ENCODE measurements at regions of chr11 and their contacts with region 1.

Region 1: DNA sequence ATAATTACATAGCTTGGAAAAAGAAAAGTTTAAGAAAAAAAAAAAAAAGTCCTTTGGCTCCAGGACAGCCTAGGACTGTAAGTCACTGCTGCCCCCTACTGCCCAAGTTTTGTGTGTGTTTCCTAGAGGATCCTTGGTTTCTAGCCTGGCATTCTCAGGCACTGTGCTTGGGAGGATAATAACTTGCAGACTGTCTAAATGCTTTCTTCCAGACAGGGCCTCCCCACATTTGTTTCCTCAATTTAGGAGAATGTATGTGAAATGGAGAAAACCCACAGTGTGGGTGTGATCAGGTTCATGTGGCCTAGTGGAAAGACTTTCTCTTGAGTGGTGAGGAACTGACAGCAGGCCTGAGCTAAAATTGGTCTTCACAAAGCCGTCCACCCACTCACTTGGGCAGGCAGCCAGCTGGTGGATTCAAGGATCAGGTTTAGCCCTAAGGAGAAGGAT is 191.0 kb downstream of the NAV2 start:
- DNase-seq: peak; percentile 88 to 89
- H3K4me3 ChIP-seq: no peak overlapping the region
- H3K27ac ChIP-seq: peak overlapping the region in 2 of 3 donors; percentile 67 to 70
- H3K4me1 ChIP-seq: peaks cover 26 to 63% of the 10 kb centered on the region in 2 donors
- H3K27me3 ChIP-seq: no peaks in the 10 kb centered on the region
- CTCF ChIP-seq: peak; percentile 35 to 92 (median 78)
- POLR2A ChIP-seq: no peak

Region 2: GRCh38 chr11:19742588-19743292 is 160.9 kb before region 1 on chr11:
- intact Hi-C with region 1: loop called (anchors 5 kb)
- DNase-seq: peak; percentile 86 to 90
- H3K4me3 ChIP-seq: no peak overlapping the region
- H3K27ac ChIP-seq: peak overlapping the region; percentile 40 to 77 (median 60)
- H3K4me1 ChIP-seq: peaks cover 16 to 48% of the 10 kb centered on the region in 2 donors
- H3K27me3 ChIP-seq: no peaks in the 10 kb centered on the region
- CTCF ChIP-seq: peak; percentile 72 to 99 (median 92)
- POLR2A ChIP-seq: no peak

Region 3: DNA sequence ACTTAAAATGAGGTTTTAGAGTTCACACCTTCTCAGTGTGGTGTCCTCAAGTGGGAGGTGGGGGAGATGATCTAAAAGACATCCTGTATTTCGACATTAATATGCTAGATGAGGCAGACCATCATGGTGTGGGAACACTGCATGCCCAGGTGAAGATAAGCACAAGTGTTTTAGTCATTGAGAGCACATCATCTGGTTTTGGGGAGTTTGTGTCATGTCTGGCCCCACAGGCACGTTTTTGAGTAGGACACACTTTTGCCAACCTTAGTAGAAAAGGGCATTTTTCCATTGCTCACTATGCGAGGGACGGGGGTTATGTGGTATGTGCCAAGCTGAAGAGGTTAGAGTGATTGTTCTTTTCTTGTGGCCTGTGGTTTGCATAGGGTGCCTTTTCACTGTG is 67.3 kb after region 1 on chr11:
- intact Hi-C with region 1: no loop called
- DNase-seq: no peak
- H3K4me3 ChIP-seq: no peak overlapping the region
- H3K27ac ChIP-seq: no peak overlapping the region
- H3K4me1 ChIP-seq: peaks cover 0 to 12% of the 10 kb centered on the region in 2 donors
- H3K27me3 ChIP-seq: no peaks in the 10 kb centered on the region
- CTCF ChIP-seq: no peak
- POLR2A ChIP-seq: no peak

Measured in thyroid gland (tissue), 4 donors.